A673 (cell line): ENCODE measurements at regions of chr12 and their contacts with region 1.

Region 1: DNA sequence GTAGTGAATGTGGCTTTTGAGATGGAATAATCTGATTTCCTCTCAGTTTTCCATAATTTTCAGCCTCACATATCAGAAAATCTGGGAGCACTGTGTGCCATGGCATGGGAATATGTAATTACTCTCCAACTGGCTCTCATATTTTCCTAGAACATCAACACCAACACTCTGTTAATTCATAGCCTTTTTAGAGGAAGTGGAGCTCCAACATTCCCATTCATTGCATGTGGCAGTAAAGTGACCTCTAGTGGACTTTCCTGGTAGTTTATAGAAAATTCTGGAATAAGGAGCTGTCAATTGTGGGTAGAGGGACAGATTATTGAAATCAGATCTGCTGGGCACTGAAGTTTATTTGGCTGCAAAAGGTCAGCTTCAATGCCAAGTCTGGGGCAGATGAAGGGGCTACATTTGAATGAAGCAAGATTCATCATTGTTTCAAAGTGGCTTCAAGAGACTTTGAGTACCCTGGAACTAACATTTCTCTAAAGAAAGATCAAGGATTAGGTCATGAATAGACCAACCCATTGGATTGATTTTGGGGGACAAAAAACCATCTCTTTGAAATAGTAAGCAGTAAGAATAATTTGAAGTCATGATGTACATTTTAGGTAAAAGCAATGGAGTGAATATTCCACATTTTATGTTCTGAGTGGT is 23.6 kb upstream of the USP44 start:
- DNase-seq: peak; percentile 71
- H3K4me3 ChIP-seq: no peak overlapping the region
- H3K27ac ChIP-seq: no peak overlapping the region
- H3K4me1 ChIP-seq: no peaks in the 10 kb centered on the region
- H3K27me3 ChIP-seq: no peaks in the 10 kb centered on the region
- CTCF ChIP-seq: peak; percentile 76

Region 2: DNA sequence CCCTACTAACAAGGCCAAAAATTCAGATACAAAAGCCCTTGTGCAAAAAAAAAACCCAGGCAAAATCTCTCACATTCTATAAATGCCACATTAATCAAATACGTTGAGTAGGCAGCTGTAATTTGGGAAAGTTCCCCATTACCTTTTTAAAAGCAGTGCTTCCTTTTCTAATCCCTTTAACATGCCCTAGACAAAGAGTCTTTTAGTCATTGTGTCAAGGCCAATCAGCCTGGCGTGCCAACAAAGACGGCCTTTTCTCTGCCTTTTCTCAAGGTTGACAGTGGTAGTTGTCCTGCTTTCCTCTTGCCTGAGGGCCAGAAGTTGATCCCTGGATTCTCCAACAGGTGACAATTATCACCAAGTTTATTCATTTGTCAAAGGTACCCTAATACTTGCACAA is 163.5 kb before region 1 on chr12:
- CTCF ChIA-PET with region 1: no interaction called
- POLR2A ChIA-PET with region 1: no interaction called
- intact Hi-C with region 1: no loop called
- DNase-seq: peak; percentile 30
- H3K4me3 ChIP-seq: no peak overlapping the region
- H3K27ac ChIP-seq: no peak overlapping the region
- H3K4me1 ChIP-seq: peaks cover 18% of the 10 kb centered on the region
- H3K27me3 ChIP-seq: no peaks in the 10 kb centered on the region
- CTCF ChIP-seq: no peak

Region 3: GRCh38 chr12:95506707-95507523 is 68.0 kb before region 1 on chr12:
- CTCF ChIA-PET with region 1: no interaction called
- POLR2A ChIA-PET with region 1: no interaction called
- intact Hi-C with region 1: no loop called
- DNase-seq: peak; percentile 4
- H3K4me3 ChIP-seq: no peak overlapping the region
- H3K27ac ChIP-seq: no peak overlapping the region
- H3K4me1 ChIP-seq: no peaks in the 10 kb centered on the region
- H3K27me3 ChIP-seq: no peaks in the 10 kb centered on the region
- CTCF ChIP-seq: no peak

Region 4: DNA sequence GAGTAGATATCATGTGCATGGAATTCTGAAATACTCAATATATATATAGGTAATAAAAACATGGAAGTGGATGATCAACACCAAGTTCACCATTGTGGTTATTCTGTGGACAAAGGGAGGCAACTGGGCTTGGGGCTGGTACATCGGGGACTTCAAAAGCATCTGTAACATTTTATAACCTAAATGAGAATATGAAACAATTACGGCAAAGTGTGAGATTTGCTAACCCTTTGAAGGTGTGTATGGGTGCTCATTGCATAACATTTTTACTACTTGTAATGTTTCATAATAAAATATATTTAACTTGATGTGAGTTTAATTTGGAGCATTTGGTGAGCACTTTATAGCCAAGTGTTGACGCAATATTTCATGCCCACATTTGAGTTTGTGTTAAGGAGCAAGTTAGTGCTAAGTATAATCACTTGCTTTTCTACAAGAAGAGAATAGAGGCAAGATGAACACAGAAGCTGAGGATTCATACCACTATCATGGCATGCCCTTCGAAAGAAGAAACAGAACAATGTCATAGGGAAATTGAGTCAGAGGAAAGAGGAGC is 106.4 kb after region 1 on chr12:
- CTCF ChIA-PET with region 1: no interaction called
- POLR2A ChIA-PET with region 1: no interaction called
- intact Hi-C with region 1: no loop called
- DNase-seq: no peak
- H3K4me3 ChIP-seq: no peak overlapping the region
- H3K27ac ChIP-seq: no peak overlapping the region
- H3K4me1 ChIP-seq: no peaks in the 10 kb centered on the region
- H3K27me3 ChIP-seq: no peaks in the 10 kb centered on the region
- CTCF ChIP-seq: no peak

Region 5: DNA sequence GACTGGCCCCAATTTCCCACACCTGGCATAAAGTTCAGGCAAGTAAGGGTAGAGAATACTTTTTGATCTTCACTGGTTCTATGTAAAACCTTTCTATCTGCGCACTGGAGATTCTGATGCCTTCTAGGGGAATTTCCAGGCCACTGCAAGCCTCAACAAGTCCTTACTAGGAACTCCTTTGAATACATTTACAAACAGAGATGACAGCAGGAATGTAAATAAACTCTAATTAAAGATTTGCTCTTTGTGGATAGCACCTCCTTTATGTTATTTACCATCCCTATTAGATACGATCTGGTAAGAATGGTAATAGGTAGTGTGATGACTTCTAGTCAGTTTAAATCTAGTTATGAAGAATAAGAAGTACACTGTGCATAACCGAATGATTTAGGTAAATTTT is 146.4 kb after region 1 on chr12:
- CTCF ChIA-PET with region 1: interaction called, 10 read pairs
- POLR2A ChIA-PET with region 1: no interaction called
- intact Hi-C with region 1: no loop called
- DNase-seq: peak; percentile 28
- H3K4me3 ChIP-seq: no peak overlapping the region
- H3K27ac ChIP-seq: no peak overlapping the region
- H3K4me1 ChIP-seq: peaks cover 36% of the 10 kb centered on the region
- H3K27me3 ChIP-seq: no peaks in the 10 kb centered on the region
- CTCF ChIP-seq: peak; percentile 50; the same call in 1 of the 2 replicates